Activated naive CD8-positive, alpha-beta T cell treated with anti-CD3 and anti-CD28 coated beads, Interleukin-2, amount 10 ng/mL, durations not matched to agents 7 days and 5 days (primary cell): ENCODE measurements at regions of chr19 and their contacts with region 1.

Region 1: DNA sequence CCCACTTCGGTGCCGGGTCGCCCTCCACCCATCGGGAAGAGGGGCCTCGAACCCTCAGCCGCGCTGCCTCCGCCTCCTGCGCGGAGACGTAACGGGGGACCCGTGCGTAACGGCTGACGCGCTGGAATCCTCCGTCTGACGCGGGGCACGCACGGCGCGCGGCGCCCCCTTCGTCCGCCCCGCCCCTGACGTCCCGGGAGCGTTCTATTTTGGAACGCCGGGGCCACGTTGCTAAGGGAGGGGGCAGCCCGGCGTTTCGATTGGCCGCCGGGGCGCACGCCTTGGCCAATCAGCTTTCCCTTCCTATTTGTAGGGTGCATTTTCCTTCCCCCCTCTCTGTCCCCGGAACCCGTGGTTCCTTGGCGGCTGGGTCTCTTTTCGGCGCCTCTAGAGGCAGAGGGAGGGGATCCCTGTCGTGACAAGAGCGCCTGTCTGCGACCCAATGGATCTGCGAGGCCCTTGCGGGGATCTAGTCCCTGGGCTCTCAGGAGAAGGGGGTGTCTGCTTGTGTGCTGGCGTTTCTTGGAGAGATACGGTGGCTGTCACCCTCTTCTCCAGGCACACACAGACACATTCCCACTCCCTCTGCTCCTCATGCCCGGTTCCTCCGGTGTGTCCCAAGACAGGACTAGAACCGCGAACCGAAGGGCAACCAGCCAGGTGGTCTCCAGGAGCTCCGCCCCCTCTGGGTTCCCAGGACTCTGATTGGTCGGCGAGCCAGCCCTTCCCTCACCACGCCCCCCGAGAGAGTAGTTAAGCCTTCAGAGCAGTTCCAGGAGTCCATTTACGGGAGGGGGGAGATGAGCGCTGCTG is 1.5 kb downstream of the FOSB start:
- DNase-seq: peak; percentile 96
- ATAC-seq: peak; percentile 62
- H3K4me3 Mint-ChIP-seq: peak overlapping the region; percentile 93
- H3K27ac Mint-ChIP-seq: peak overlapping the region; percentile 97
- H3K4me1 Mint-ChIP-seq: peaks cover 16% of the 10 kb centered on the region
- H3K27me3 Mint-ChIP-seq: peaks cover 41% of the 10 kb centered on the region

Region 2: DNA sequence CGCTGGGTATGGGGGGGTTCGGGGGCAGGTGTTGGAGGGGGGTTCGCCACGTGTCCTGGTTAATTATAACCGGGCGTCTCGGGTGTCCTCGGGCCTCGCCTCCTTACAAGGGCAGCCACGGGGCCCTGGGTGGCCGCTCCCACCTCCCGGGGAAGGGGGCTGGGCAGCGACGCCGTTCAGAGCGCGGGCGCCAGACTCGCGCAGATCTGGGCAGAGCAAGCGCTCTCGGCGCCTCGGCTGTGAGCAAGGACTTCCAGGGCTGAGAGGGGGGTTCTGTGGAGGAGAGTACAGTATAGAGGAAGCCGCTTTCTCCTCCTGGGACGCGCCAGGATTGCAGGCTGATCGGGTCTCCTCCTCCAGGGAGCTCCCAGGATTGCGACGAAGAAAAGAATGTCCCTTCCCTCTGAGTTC is 145.7 kb before region 1 on chr19:
- POLR2A ChIA-PET with region 1: no interaction called
- DNase-seq: no peak
- ATAC-seq: no peak
- H3K4me3 Mint-ChIP-seq: no peak overlapping the region
- H3K27ac Mint-ChIP-seq: no peak overlapping the region
- H3K4me1 Mint-ChIP-seq: peaks cover 5% of the 10 kb centered on the region
- H3K27me3 Mint-ChIP-seq: peaks cover 38% of the 10 kb centered on the region

Region 3: GRCh38 chr19:45455707-45456499 is 13.4 kb before region 1 on chr19:
- POLR2A ChIA-PET with region 1: interaction called, 30 read pairs
- DNase-seq: peak; percentile 57
- ATAC-seq: peak; percentile 48
- H3K4me3 Mint-ChIP-seq: peak overlapping the region; percentile 1
- H3K27ac Mint-ChIP-seq: peak overlapping the region; percentile 4
- H3K4me1 Mint-ChIP-seq: peaks cover 26% of the 10 kb centered on the region
- H3K27me3 Mint-ChIP-seq: peaks cover 34% of the 10 kb centered on the region

Region 4: GRCh38 chr19:45508861-45509691 is 39.7 kb after region 1 on chr19:
- POLR2A ChIA-PET with region 1: no interaction called
- DNase-seq: peak; percentile 60
- ATAC-seq: no peak
- H3K4me3 Mint-ChIP-seq: peak overlapping the region; percentile 98
- H3K27ac Mint-ChIP-seq: peak overlapping the region; percentile 95
- H3K4me1 Mint-ChIP-seq: peaks cover 39% of the 10 kb centered on the region
- H3K27me3 Mint-ChIP-seq: no peaks in the 10 kb centered on the region